Mammary epithelial cell (primary cell): ENCODE measurements at regions of chr2 and their contacts with region 1.

Region 1: DNA sequence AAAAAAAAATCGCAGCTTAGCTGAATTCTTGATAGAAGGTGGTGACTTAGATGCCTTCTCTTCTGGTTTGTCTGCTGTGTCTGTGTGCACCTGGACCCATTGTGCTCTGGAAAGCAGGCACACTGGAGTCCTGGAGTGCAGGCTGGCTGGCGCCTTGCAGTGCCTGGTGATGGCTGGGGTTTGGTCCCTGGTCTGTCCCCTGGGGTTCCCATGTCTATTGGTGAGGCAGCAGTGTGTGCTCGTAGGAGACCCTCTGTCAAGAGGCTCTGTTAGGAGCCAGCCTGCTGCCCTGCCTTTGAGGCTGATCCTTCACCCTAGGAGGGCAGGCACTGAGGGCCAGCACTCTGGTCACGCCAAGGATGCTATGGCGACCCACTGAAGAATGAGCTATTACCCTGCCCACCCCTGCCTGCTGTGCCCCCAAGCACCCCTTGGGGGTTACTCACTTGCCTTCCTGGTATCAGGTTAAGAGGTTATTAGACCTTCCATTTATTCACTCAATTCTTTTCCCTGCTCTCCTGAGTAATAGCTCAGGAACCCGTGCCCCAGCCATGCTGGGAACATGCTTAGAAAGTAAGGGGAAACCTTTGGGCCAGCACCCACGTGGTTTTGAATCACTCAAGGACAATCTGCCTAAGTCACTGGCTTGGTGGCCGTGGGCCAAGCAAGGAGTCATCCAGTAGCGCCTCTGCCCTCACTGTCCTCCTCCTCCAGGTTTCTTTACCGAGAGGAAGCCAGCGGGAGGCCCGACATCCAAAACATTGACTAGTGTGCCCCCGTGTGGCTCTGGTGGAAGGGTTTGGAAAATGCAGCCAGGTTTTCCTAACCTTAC is 284.5 kb downstream of the PRKCE start:
- DNase-seq: peak; percentile 97
- H3K4me3 ChIP-seq: no peak overlapping the region
- H3K27ac ChIP-seq: peak overlapping the region; percentile 11
- H3K4me1 ChIP-seq: peaks cover 28% of the 10 kb centered on the region
- H3K27me3 ChIP-seq: no peaks in the 10 kb centered on the region
- CTCF ChIP-seq: peak; percentile 59 to 86

Region 2: GRCh38 chr2:44981136-44982108 is 954.6 kb before region 1 on chr2:
- CTCF ChIA-PET with region 1: interaction called, 3 read pairs
- dilution Hi-C with region 1: no loop called
- in situ Hi-C with region 1: no loop called
- intact Hi-C with region 1: loop called (anchors 5 kb)
- DNase-seq: peak; percentile 40
- H3K4me3 ChIP-seq: no peak overlapping the region
- H3K27ac ChIP-seq: no peak overlapping the region
- H3K4me1 ChIP-seq: no peaks in the 10 kb centered on the region
- H3K27me3 ChIP-seq: no peaks in the 10 kb centered on the region
- CTCF ChIP-seq: peak; percentile 81 to 92

Region 3: GRCh38 chr2:45643543-45644542 is 292.2 kb before region 1 on chr2:
- CTCF ChIA-PET with region 1: no interaction called
- dilution Hi-C with region 1: no loop called
- in situ Hi-C with region 1: loop called (anchors 5 to 10 kb)
- intact Hi-C with region 1: loop called (anchors 1 kb)
- DNase-seq: peak; percentile 49
- H3K4me3 ChIP-seq: peak overlapping the region; percentile 48 to 65 (median 51)
- H3K27ac ChIP-seq: no peak overlapping the region
- H3K4me1 ChIP-seq: peaks cover 12% of the 10 kb centered on the region
- H3K27me3 ChIP-seq: peaks cover 2% of the 10 kb centered on the region
- CTCF ChIP-seq: peak; percentile 61 to 83

Region 4: DNA sequence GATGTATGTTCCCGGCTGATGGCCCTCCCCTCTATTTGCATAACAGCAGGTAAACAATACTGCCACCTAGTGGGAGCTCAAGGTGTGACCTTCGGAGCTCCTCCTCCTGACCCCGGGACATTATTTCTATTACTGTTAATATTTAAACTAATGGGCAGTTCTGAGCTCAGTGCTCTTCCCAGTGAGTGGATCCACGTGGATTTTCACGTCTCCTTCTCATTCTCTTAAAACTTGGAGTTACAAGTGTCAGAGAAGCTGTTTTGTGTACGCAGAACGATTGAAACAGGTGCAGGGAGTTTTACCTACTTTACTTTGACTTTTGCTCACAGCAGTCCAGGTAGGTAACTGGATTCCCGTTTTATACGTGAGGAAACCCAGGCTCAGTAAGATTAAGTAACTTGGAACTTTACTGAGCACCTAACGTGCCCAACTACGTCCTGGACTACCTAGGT is 157.3 kb before region 1 on chr2:
- CTCF ChIA-PET with region 1: interaction called, 8 read pairs
- dilution Hi-C with region 1: no loop called
- in situ Hi-C with region 1: loop called in 1 of 2 experiments (anchors 10 kb)
- intact Hi-C with region 1: loop called (anchors 1 kb)
- DNase-seq: peak; percentile 41
- H3K4me3 ChIP-seq: no peak overlapping the region
- H3K27ac ChIP-seq: no peak overlapping the region
- H3K4me1 ChIP-seq: no peaks in the 10 kb centered on the region
- H3K27me3 ChIP-seq: no peaks in the 10 kb centered on the region
- CTCF ChIP-seq: peak; percentile 79 to 82

Region 5: DNA sequence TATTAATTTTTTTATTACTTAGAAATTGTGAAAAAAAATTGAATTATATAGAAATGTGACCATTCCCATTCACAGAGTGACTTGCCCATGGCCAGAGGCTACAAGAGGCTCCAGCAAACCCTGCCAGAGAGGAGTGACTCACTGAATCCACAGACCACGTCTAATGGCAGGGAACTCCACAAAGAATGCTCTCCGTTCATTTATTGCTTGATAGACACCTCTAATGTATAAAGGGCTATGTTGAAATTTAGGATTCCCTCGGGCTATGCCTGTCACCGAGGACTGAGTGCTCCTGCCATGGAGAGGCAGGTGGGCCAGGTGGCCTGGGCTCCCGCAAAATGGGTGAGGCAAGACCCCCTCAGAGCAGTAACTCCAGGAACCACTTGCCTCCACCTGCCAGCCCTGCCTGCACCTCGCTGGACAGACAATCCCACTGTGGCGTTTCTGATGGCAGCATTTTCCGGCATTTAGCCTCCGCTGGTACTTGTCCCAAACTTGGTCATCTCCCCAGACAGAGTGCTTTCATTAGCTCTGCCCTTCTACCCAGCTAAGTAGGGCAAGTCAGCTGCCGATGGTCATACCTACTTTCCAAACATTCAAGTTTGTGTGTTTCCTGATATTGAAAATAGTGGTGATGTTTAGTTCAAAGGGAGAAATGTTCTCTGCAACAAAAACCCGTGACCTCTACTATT is 84.2 kb before region 1 on chr2:
- CTCF ChIA-PET with region 1: no interaction called
- dilution Hi-C with region 1: no loop called
- in situ Hi-C with region 1: no loop called
- intact Hi-C with region 1: loop called (anchors 1 kb)
- DNase-seq: peak; percentile 88
- H3K4me3 ChIP-seq: no peak overlapping the region
- H3K27ac ChIP-seq: no peak overlapping the region
- H3K4me1 ChIP-seq: peaks cover 40% of the 10 kb centered on the region
- H3K27me3 ChIP-seq: no peaks in the 10 kb centered on the region
- CTCF ChIP-seq: no peak

Region 6: DNA sequence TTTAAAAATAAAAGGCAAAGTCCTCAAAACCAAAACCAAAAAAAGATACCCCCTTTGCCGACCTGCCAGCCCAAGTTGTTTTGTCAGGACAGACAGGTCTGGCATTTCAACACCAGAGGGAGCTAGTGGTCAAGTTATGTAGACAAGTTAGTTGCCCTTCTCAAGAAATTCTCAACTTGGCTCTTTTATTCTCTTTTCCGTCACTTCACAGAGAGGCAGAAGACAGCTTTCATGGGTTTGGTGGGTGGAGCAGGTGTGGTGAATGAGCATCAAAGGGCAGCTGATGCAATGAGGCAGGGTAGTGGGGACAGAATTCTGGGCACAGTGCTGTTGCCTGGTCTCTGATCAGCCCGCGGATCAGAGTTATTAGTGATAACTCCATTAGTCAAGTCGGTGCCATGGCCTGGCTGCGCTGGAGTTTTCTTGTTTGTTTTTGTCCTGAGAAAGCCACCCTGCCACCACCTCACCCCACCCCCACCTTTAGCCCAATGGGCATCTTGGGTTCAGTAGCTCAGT is 57.5 kb after region 1 on chr2:
- CTCF ChIA-PET with region 1: no interaction called
- dilution Hi-C with region 1: no loop called
- in situ Hi-C with region 1: no loop called
- intact Hi-C with region 1: loop called (anchors 1 kb)
- DNase-seq: peak; percentile 58
- H3K4me3 ChIP-seq: no peak overlapping the region
- H3K27ac ChIP-seq: no peak overlapping the region
- H3K4me1 ChIP-seq: peaks cover 19% of the 10 kb centered on the region
- H3K27me3 ChIP-seq: no peaks in the 10 kb centered on the region
- CTCF ChIP-seq: peak; percentile 78 to 79